Activated CD4-positive, alpha-beta memory T cell treated with anti-CD3 and anti-CD28 coated beads, Interleukin-2, amount 10 ng/mL, durations not matched to agents 7 days and 5 days (primary cell): ENCODE measurements at regions of chr14 and their contacts with region 1.

Region 1: DNA sequence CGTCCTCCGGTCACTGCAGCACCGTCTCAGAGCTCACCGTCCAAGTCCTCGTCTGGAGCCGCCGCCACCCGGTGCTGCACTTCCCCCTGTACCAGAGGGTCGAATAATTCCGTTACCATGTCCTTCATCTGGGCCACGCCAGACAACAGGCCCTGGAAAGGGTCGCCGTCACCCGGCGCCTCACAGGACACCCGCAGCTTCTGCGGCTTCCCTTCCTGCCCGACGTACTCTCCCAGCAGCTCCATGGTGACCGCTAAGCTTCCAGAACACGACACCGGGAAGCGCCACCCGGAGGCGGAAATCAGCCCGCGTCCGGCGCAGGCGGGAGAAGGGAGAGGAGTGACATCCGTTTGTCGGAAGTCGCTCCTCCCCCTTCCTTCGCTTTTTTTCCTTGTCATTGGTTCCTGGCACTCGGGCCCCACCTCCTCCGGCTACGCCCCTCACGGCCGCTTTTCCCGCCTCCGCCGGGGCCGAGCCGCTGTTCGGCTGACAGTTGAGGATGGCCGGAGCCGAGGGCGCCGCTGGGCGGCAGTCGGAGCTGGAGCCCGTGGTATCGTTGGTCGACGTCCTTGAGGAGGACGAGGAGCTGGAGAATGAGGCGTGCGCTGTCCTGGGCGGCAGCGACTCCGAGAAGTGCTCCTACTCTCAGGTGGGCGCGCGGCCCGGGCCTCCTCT is at the starts of genes GON7 and UBR7:
- DNase-seq: peak; percentile 92
- H3K4me3 Mint-ChIP-seq: peak within 1 kb of the TSS; percentile 78
- H3K27ac Mint-ChIP-seq: peak within 1 kb of the TSS; percentile 90
- H3K4me1 Mint-ChIP-seq: peaks cover 49% of the 10 kb centered on the region
- H3K27me3 Mint-ChIP-seq: no peaks in the 10 kb centered on the region
- total RNA-seq, gene GON7: 16.0 to 18.2 TPM
- total RNA-seq, gene UBR7: 43.5 to 47.7 TPM

Region 2: DNA sequence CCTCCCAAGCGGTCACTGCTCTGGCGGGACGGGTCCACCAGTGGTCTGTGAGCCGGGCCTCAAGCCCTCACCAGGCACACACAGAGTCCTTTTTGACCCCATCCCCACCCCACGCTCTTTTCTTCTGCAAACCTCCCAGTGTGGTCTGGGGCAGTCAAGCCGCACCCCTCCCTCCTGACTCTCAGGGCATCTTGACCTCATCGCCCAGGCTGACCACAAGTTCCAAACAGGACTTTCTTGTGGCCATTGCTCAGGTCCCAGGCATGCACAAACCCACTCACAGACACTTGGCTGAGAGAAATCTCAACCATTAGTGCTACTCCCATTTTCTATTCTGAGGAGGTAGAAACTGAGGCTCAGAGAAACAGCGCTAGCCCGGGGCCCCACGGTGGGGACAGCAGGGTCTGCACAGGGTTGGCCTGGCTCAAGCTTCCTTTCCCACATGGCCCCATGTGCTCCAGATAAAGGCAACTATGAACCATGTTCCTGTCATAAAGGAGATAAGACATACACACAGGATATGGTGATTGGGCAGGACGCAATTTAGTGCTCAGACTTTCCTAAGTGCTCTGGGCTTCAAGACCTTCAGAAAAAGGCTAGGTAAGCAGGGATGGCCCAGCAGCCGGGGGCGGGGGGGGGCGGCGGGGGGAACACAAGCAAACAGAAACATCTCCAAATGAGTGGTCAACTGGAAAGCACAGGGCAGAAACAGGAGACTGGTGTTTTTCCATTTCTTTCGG is 160.8 kb before region 1 on chr14:
- CTCF ChIA-PET with region 1: no interaction called
- POLR2A ChIA-PET with region 1: no interaction called
- DNase-seq: no peak
- H3K4me3 Mint-ChIP-seq: no peak overlapping the region
- H3K27ac Mint-ChIP-seq: no peak overlapping the region
- H3K4me1 Mint-ChIP-seq: peaks cover 12% of the 10 kb centered on the region
- H3K27me3 Mint-ChIP-seq: no peaks in the 10 kb centered on the region

Region 3: GRCh38 chr14:93122820-93123219 is 84.1 kb before region 1 on chr14:
- CTCF ChIA-PET with region 1: no interaction called
- POLR2A ChIA-PET with region 1: no interaction called
- DNase-seq: no peak
- H3K4me3 Mint-ChIP-seq: no peak overlapping the region
- H3K27ac Mint-ChIP-seq: no peak overlapping the region
- H3K4me1 Mint-ChIP-seq: peaks cover 4% of the 10 kb centered on the region
- H3K27me3 Mint-ChIP-seq: peaks cover 3% of the 10 kb centered on the region

Region 4: GRCh38 chr14:93184388-93185353 is 22.3 kb before region 1 on chr14 and contains the starts of genes LYSET and MOAP1:
- CTCF ChIA-PET with region 1: interaction called, 47 read pairs
- POLR2A ChIA-PET with region 1: interaction called, 136 read pairs
- DNase-seq: peak; percentile 94
- H3K4me3 Mint-ChIP-seq: peak within 1 kb of the TSS; percentile 94
- H3K27ac Mint-ChIP-seq: peak within 1 kb of the TSS; percentile 80
- H3K4me1 Mint-ChIP-seq: peaks cover 36% of the 10 kb centered on the region
- H3K27me3 Mint-ChIP-seq: no peaks in the 10 kb centered on the region
- total RNA-seq, gene LYSET: 7.4 to 8.3 TPM
- total RNA-seq, gene MOAP1: 23.1 to 24.6 TPM

Region 5: DNA sequence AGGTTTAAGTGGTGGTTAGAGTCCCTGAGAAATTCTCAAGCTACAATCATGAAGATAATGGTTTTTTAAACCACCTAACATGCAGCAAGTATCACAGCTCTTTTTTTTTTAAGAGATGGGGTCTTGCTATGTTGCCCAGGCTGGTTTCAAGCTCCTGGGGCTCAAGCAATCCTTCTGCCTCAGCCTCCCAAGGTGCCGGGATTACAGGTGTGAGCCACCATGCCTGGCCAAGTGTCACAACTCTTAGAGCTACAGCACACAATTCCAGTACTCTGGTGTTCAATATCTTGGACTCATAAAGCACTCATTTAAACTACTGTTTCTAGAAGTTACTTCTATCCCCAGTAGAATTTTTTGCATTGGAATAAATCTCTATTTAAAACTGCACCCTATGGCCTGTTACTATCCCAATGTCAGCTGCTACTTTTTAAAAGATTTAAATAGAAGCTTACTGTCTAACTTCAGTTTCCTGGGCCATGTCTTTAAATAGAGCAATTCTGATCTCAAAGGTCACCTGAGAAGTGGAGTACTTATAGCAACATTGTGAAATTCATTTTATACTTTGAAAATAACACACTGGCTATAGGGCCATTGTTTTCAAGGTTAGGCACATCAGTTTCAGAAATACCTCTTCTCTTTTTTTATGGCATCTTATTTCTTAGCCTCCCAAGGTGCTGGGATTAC is 11.5 kb before region 1 on chr14:
- CTCF ChIA-PET with region 1: interaction called, 10 read pairs
- POLR2A ChIA-PET with region 1: interaction called, 4 read pairs
- DNase-seq: no peak
- H3K4me3 Mint-ChIP-seq: no peak overlapping the region
- H3K27ac Mint-ChIP-seq: no peak overlapping the region
- H3K4me1 Mint-ChIP-seq: no peaks in the 10 kb centered on the region
- H3K27me3 Mint-ChIP-seq: no peaks in the 10 kb centered on the region

Region 6: GRCh38 chr14:93332397-93332852 is 125.5 kb after region 1 on chr14:
- CTCF ChIA-PET with region 1: no interaction called
- POLR2A ChIA-PET with region 1: interaction called, 11 read pairs
- DNase-seq: no peak
- H3K4me3 Mint-ChIP-seq: peak overlapping the region; percentile 85
- H3K27ac Mint-ChIP-seq: peak overlapping the region; percentile 79
- H3K4me1 Mint-ChIP-seq: peaks cover 48% of the 10 kb centered on the region
- H3K27me3 Mint-ChIP-seq: no peaks in the 10 kb centered on the region